Psoas muscle (tissue), 8 donors: ENCODE measurements at regions of chr7 and their contacts with region 1.

Region 1: GRCh38 chr7:35037526-35038339 is 448 bp upstream of the DPY19L1 start:
- DNase-seq: peak; percentile 97
- ATAC-seq: peak; percentile 93 to 95 (median 94)
- H3K4me3 ChIP-seq: peak overlapping the region; percentile 80
- H3K27ac ChIP-seq: peak overlapping the region; percentile 85
- H3K4me1 ChIP-seq: peaks cover 17% of the 10 kb centered on the region
- H3K27me3 ChIP-seq: no peaks in the 10 kb centered on the region
- CTCF ChIP-seq: peak; percentile 82

Region 2: GRCh38 chr7:34823640-34824258 is 214.0 kb before region 1 on chr7:
- intact Hi-C with region 1: loop called in 1 of 2 experiments (anchors 10 kb)
- DNase-seq: peak; percentile 18 to 51
- ATAC-seq: peak in 2 of 4 donors; percentile 42 to 56
- H3K4me3 ChIP-seq: no peak overlapping the region
- H3K27ac ChIP-seq: no peak overlapping the region
- H3K4me1 ChIP-seq: no peaks in the 10 kb centered on the region
- H3K27me3 ChIP-seq: no peaks in the 10 kb centered on the region
- CTCF ChIP-seq: peak; percentile 87

Region 3: GRCh38 chr7:34928049-34928448 is 109.7 kb before region 1 on chr7:
- intact Hi-C with region 1: no loop called
- DNase-seq: peak; percentile 16 to 54
- ATAC-seq: no peak
- H3K4me3 ChIP-seq: no peak overlapping the region
- H3K27ac ChIP-seq: no peak overlapping the region
- H3K4me1 ChIP-seq: no peaks in the 10 kb centered on the region
- H3K27me3 ChIP-seq: no peaks in the 10 kb centered on the region
- CTCF ChIP-seq: peak; percentile 18

Region 4: GRCh38 chr7:34995757-34996156 is 42.0 kb before region 1 on chr7:
- intact Hi-C with region 1: no loop called
- DNase-seq: no peak
- ATAC-seq: no peak
- H3K4me3 ChIP-seq: no peak overlapping the region
- H3K27ac ChIP-seq: no peak overlapping the region
- H3K4me1 ChIP-seq: no peaks in the 10 kb centered on the region
- H3K27me3 ChIP-seq: no peaks in the 10 kb centered on the region
- CTCF ChIP-seq: no peak

Region 5: GRCh38 chr7:35694781-35695472 is 657.2 kb after region 1 on chr7 and contains the start of gene HERPUD2:
- intact Hi-C with region 1: no loop called
- DNase-seq: peak; percentile 92 to 96
- ATAC-seq: peak; percentile 96 to 97 (median 97)
- H3K4me3 ChIP-seq: peak within 1 kb of the TSS; percentile 96
- H3K27ac ChIP-seq: peak within 1 kb of the TSS; percentile 96
- H3K4me1 ChIP-seq: peaks cover 32% of the 10 kb centered on the region
- H3K27me3 ChIP-seq: no peaks in the 10 kb centered on the region
- CTCF ChIP-seq: no peak
- total RNA-seq, gene HERPUD2: 12.5 to 21.5 (median 16.4) TPM